ENCODE measurements at regions of chr7 and their contacts with region 1.

Region 1: DNA sequence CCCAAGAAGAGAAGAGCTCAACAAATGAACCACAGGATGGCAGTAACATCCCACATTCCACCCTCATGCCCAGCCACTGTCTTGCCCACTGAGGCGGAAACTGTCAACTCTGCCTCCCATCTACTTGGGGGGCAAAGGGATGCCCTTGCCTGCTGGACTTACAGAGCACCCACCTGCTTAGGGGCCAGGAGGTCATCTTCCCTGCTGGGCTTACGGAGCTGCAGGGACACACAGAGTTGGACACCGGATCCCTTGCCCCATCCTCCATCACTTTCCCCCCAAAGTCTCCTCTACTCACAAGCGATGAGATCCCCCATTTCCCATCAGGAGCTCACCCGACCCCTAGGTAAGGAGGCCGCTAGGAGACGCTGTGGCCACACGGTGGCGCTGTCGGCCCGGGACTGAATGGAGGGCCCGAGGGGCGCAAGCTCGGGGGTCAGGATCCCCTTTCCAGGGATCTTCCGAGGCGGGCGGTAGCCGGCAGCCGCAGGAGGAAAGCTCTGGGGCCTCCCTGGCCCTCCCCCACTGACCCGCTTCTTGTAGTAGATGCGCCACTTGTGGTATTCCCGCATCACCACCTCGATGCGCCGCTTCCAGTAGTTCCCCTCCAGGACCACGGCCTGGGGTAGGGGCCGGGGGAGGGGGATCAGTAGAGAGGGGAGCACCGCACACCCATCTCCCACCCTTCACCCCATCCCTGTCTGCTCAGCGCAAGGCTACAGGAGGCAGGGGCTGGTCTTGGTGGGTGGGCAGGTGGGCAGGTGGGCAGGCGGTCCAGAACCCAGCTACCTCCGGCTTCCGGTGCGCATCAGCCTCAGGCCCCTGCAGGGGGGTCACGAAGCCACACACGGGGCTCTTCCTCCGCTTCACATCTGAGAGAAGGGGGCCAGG is 17.3 kb downstream of the MLXIPL start:
- DNase-seq: peak; percentile 73
- H3K4me3 Mint-ChIP-seq: no peak overlapping the region
- H3K27ac Mint-ChIP-seq: no peak overlapping the region
- H3K4me1 Mint-ChIP-seq: peaks cover 2% of the 10 kb centered on the region
- H3K27me3 Mint-ChIP-seq: peaks cover 72% of the 10 kb centered on the region

Region 2: GRCh38 chr7:73451780-73452398 is 155.2 kb before region 1 on chr7:
- CTCF ChIA-PET with region 1: no interaction called
- DNase-seq: peak; percentile 37
- H3K4me3 Mint-ChIP-seq: no peak overlapping the region
- H3K27ac Mint-ChIP-seq: no peak overlapping the region
- H3K4me1 Mint-ChIP-seq: peaks cover 4% of the 10 kb centered on the region
- H3K27me3 Mint-ChIP-seq: no peaks in the 10 kb centered on the region

Region 3: GRCh38 chr7:73622909-73623797 is 16.1 kb after region 1 on chr7:
- CTCF ChIA-PET with region 1: interaction called, 16 read pairs
- DNase-seq: no peak
- H3K4me3 Mint-ChIP-seq: no peak overlapping the region
- H3K27ac Mint-ChIP-seq: no peak overlapping the region
- H3K4me1 Mint-ChIP-seq: peaks cover 4% of the 10 kb centered on the region
- H3K27me3 Mint-ChIP-seq: peaks cover 94% of the 10 kb centered on the region

Region 4: DNA sequence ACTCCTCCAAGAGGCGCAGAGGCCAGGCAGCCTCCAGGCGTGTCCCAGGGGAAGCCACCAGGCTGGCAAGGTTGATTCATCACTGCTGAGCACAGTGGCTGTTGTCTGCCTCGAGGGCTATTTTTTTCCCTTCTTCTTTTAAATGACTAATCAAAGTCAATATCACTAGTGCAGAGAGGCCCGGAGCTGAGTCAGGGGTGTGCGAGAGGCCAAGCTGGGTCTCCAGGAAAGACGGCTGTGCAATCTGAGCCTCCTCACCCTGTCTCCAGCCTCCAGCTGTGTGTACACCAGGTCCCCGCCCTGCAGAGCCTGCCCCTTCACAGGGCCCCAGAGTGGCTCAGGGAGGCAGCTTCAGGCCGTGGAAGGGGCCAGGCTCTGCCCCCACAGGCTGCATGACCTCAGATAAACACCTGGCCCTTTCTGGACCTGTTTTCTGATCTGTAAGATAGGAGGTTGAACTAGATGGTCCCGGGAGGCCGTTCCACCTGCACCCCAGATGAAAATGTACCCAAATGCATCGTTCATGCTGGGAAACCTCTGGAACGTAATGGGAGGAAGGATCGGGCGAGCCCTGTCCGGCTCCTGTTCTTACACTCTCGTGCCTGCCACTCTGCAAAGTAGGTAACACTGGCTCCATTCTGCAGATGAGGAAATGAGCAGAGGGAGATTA is 108.7 kb after region 1 on chr7:
- CTCF ChIA-PET with region 1: interaction called, 13 read pairs
- DNase-seq: no peak
- H3K4me3 Mint-ChIP-seq: no peak overlapping the region
- H3K27ac Mint-ChIP-seq: no peak overlapping the region
- H3K4me1 Mint-ChIP-seq: peaks cover 39% of the 10 kb centered on the region
- H3K27me3 Mint-ChIP-seq: peaks cover 77% of the 10 kb centered on the region

Region 5: GRCh38 chr7:73726083-73726466 is 119.0 kb after region 1 on chr7:
- CTCF ChIA-PET with region 1: interaction called, 61 read pairs
- DNase-seq: no peak
- H3K4me3 Mint-ChIP-seq: no peak overlapping the region
- H3K27ac Mint-ChIP-seq: no peak overlapping the region
- H3K4me1 Mint-ChIP-seq: no peaks in the 10 kb centered on the region
- H3K27me3 Mint-ChIP-seq: peaks cover 36% of the 10 kb centered on the region

Region 6: GRCh38 chr7:73734619-73735527 is 127.8 kb after region 1 on chr7:
- CTCF ChIA-PET with region 1: interaction called, 87 read pairs
- DNase-seq: peak; percentile 87
- H3K4me3 Mint-ChIP-seq: no peak overlapping the region
- H3K27ac Mint-ChIP-seq: peak overlapping the region; percentile 69
- H3K4me1 Mint-ChIP-seq: peaks cover 24% of the 10 kb centered on the region
- H3K27me3 Mint-ChIP-seq: no peaks in the 10 kb centered on the region